PC-9 (cell line): ENCODE measurements at regions of chr2 and their contacts with region 1.

Region 1: GRCh38 chr2:206981739-206982340 is 42.5 kb downstream of the CPO start:
- DNase-seq: peak in 1 of 2 experiments; percentile 56
- H3K4me3 ChIP-seq: no peak overlapping the region
- H3K27ac ChIP-seq: no peak overlapping the region
- H3K4me1 ChIP-seq: peaks cover 32% of the 10 kb centered on the region
- H3K27me3 ChIP-seq: no peaks in the 10 kb centered on the region
- CTCF ChIP-seq: peak; percentile 72

Region 2: GRCh38 chr2:206800506-206801417 is 181.1 kb before region 1 on chr2:
- CTCF ChIA-PET with region 1: no interaction called
- POLR2A ChIA-PET with region 1: no interaction called
- intact Hi-C with region 1: loop called (anchors 1 kb)
- DNase-seq: peak; percentile 46 to 59
- H3K4me3 ChIP-seq: no peak overlapping the region
- H3K27ac ChIP-seq: no peak overlapping the region
- H3K4me1 ChIP-seq: no peaks in the 10 kb centered on the region
- H3K27me3 ChIP-seq: no peaks in the 10 kb centered on the region
- CTCF ChIP-seq: peak; percentile 74

Region 3: DNA sequence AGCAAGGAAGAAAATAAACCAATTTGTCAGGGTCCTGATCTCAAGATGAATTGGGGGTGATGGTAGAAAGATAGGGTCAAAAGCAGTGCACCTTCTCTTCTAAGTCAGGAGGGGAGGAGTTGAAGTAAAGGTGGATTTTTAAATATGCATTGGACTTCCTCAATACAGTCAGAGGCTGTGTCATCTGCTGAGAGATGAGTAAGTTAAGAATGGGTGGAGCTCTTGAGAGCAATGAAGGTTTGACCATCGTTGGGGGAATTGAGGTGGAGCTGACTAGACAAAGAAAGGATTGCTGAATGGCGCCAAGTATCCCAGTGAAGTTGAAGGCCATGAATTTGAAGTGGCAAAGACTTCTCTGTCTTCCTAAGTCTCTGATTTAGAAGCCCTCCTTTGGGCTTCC is 60.9 kb before region 1 on chr2:
- CTCF ChIA-PET with region 1: no interaction called
- POLR2A ChIA-PET with region 1: no interaction called
- intact Hi-C with region 1: no loop called
- DNase-seq: no peak
- H3K4me3 ChIP-seq: no peak overlapping the region
- H3K27ac ChIP-seq: no peak overlapping the region
- H3K4me1 ChIP-seq: no peaks in the 10 kb centered on the region
- H3K27me3 ChIP-seq: no peaks in the 10 kb centered on the region
- CTCF ChIP-seq: no peak

Region 4: DNA sequence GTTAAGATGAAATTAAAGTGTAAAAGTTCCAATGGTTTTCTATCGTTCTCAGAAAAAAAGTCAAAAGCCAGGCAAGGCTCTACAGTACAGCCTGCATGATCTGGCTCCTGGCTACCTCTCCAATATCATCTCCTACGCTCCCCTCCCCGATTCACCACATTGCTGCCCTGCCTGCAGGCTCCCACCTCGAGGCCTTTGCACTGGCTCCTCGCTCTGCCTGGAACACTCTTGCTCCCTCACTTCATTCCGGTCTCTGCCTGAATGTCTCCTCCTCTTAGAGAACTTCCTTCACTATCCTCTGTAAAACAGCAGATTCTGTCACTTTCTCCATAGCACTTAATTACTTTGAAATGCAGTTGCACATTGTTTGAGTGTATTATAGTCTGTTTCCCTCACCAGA is 111.4 kb after region 1 on chr2:
- CTCF ChIA-PET with region 1: no interaction called
- POLR2A ChIA-PET with region 1: no interaction called
- intact Hi-C with region 1: no loop called
- DNase-seq: no peak
- H3K4me3 ChIP-seq: no peak overlapping the region
- H3K27ac ChIP-seq: no peak overlapping the region
- H3K4me1 ChIP-seq: no peaks in the 10 kb centered on the region
- H3K27me3 ChIP-seq: no peaks in the 10 kb centered on the region
- CTCF ChIP-seq: no peak

Region 5: DNA sequence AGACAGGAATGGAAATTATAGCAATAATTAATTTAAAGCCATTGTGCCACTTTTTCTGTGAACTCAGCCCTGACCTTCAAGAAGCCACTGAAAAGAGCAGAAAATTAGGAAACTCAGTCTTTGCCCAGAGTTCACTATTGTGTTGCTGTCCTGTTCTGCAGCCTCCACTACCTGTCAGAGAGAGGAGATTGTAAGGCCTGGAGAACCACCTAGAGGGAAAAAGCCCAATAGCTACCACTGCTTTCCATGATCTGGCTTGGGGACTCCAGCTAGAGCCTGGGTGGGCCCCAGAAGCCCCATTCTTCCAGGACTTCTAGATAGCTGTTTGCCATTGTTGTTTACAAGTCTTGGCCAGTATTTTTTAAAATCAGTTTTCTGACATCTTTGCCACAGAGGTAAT is 360.0 kb after region 1 on chr2:
- CTCF ChIA-PET with region 1: no interaction called
- POLR2A ChIA-PET with region 1: no interaction called
- intact Hi-C with region 1: loop called (anchors 5 kb)
- DNase-seq: no peak
- H3K4me3 ChIP-seq: no peak overlapping the region
- H3K27ac ChIP-seq: no peak overlapping the region
- H3K4me1 ChIP-seq: no peaks in the 10 kb centered on the region
- H3K27me3 ChIP-seq: no peaks in the 10 kb centered on the region
- CTCF ChIP-seq: no peak

Region 6: DNA sequence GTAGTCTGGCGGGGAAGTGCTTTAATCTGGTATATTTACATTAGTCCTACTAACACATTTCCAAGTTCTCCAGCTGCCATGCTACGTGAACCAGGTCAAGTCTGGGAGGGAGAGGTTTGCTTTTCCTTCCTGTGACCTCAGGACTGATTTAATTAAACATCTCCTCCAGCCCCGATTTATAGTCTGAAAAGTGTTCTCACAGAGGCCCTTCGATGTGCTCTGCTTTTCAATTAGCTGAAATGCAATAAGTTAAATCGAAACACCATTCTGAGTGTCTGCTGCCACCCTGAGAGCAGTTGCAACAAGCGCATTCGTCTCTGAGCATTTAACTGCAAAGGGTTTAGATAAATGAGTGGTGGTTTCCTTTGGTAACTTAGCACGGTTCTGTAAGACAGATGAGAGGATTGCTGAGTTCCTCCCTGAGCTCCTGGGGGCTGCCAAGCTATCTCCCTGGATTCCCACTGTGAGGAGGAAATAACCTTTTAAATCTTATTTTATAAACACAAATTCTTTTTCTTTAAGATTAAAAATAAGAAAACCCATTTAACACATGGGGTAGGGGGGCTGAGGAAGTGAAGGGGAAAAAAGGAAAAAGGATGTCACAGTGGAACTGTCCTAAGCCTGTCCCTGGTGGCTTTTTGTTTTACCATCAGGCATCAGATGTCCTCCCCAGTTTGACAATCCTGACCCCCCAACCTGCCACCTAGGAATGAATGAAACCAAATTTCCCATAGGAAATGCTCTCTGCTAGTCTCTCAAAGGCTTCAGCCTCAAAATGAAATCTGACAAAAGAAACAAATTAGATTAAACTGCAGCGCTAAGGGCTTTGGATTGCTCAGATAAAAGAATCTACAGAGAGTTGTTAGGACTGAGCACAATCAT is 491.4 kb after region 1 on chr2:
- CTCF ChIA-PET with region 1: interaction called, 3 read pairs
- POLR2A ChIA-PET with region 1: interaction called, 7 read pairs
- intact Hi-C with region 1: loop called (anchors 1 kb)
- DNase-seq: peak; percentile 40 to 46
- H3K4me3 ChIP-seq: no peak overlapping the region
- H3K27ac ChIP-seq: no peak overlapping the region
- H3K4me1 ChIP-seq: peaks cover 18% of the 10 kb centered on the region
- H3K27me3 ChIP-seq: no peaks in the 10 kb centered on the region
- CTCF ChIP-seq: peak; percentile 64

Region 7: GRCh38 chr2:207625018-207625907 is 643.4 kb after region 1 on chr2 and contains the start of gene METTL21A:
- CTCF ChIA-PET with region 1: no interaction called
- POLR2A ChIA-PET with region 1: no interaction called
- intact Hi-C with region 1: loop called (anchors 5 kb)
- DNase-seq: peak; percentile 71 to 81
- H3K4me3 ChIP-seq: peak within 1 kb of the TSS; percentile 85
- H3K27ac ChIP-seq: peak within 1 kb of the TSS; percentile 85
- H3K4me1 ChIP-seq: peaks cover 13% of the 10 kb centered on the region
- H3K27me3 ChIP-seq: no peaks in the 10 kb centered on the region
- CTCF ChIP-seq: no peak
- total RNA-seq, gene METTL21A: 11.7 and 13.6 TPM in 2 replicates

Region 8: DNA sequence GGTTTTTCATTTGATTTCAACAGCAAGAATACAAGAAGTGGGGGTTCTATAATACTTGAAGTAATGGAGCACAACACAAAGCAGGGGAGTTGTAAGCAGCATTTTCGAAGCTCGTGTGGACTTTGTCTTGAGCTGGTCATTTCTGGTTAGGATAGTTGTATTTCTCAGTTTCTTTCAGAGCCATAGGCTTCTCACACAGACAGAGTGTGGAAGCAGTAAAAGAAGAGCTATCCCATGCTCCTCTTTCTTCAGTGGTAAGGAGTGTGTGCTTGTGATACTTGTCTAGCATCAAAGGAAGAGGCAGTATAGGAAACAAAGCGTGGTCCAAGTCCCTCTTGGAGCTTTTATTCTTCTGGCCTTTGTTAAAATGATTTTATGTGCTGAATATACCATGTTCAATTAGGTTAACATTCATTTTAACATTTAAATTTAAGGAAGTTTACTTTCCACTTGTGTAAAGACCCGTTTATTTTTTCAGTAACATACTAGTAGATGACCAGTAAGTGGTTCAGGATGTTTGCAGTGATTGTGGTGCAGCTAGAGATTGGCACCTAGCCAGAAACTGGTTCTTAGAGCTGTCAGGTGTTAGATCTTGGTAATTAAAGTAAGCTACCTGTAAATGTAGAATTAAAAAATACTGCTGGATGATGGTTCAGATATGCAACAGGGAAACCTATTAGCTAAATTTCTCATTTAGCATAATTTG is 744.2 kb after region 1 on chr2:
- CTCF ChIA-PET with region 1: no interaction called
- POLR2A ChIA-PET with region 1: no interaction called
- intact Hi-C with region 1: loop called (anchors 10 kb)
- DNase-seq: no peak
- H3K4me3 ChIP-seq: no peak overlapping the region
- H3K27ac ChIP-seq: peak overlapping the region; percentile 39; the same call in 1 of the 2 replicates
- H3K4me1 ChIP-seq: peaks cover 55% of the 10 kb centered on the region
- H3K27me3 ChIP-seq: no peaks in the 10 kb centered on the region
- CTCF ChIP-seq: no peak